K562 (cell line): ENCODE measurements at regions of chr18 and their contacts with region 1.

Region 1: DNA sequence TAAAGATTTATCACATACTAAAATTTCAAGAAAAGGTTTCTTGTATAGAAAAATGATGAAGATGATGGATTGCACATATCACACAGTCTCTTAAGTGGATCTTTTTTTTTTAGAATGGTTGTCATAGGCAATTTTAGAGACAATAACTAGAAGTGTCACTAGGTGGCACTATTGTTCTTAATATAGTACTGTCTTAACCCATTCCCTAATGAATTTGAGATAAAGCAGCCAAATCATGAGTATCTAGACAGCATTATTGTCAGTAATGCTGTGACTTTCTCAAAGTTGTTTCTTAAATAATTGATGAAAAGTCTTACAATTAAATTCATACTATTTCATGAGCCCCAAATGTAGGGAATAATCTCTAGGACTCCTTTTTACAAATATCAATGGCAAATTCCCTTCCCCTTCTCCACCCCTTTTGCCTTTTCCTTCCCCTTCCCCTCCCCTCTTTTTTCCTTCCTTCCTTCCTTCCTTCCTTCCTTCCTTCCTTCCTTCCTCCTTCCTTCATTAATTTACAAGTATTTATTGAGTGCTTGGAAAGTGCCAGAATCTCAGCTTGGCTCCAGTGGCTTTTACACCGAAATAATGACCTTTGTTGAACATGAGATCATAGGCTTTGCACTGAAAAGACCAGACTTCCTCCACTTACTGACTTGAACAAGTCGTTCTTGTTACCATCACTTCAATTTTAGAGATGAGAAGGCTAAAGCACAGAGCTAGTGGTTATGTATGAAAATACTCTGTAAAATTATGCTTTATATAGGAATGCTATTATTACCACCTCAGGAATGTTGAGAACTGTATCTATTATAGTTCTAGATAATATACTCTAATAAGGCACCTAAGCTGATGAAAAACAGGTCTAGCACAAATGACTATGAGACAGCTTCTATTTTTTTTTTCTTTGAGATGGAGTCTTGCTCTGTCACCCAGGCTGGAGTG is 19.8 kb downstream of the MYL12B start:
- DNase-seq: peak; percentile 64 to 85 (median 70)
- ATAC-seq: peak; percentile 81
- H3K4me3 ChIP-seq: no peak overlapping the region
- H3K27ac ChIP-seq: no peak overlapping the region
- H3K4me1 ChIP-seq: peaks cover 4 to 8% of the 10 kb centered on the region in 2 experiments; a peak in 4 of 5 replicates
- H3K27me3 ChIP-seq: no peaks in the 10 kb centered on the region
- CTCF ChIP-seq: peak; percentile 51 to 91 (median 60); a peak in 5 of 6 replicates
- EP300 ChIP-seq: no peak
- POLR2A ChIP-seq: no peak
- RAD21 ChIP-seq: peak; percentile 99

Region 2: GRCh38 chr18:1930291-1931270 is 1351.1 kb before region 1 on chr18:
- CTCF ChIA-PET with region 1: no interaction called
- POLR2A ChIA-PET with region 1: no interaction called
- in situ Hi-C with region 1: no loop called
- intact Hi-C with region 1: no loop called
- DNase-seq: no peak
- ATAC-seq: no peak
- H3K4me3 ChIP-seq: no peak overlapping the region
- H3K27ac ChIP-seq: no peak overlapping the region
- H3K4me1 ChIP-seq: no peaks in the 10 kb centered on the region
- H3K27me3 ChIP-seq: no peaks in the 10 kb centered on the region; a peak in 1 of 5 replicates
- CTCF ChIP-seq: no peak
- EP300 ChIP-seq: no peak
- POLR2A ChIP-seq: no peak
- RAD21 ChIP-seq: no peak

Region 3: DNA sequence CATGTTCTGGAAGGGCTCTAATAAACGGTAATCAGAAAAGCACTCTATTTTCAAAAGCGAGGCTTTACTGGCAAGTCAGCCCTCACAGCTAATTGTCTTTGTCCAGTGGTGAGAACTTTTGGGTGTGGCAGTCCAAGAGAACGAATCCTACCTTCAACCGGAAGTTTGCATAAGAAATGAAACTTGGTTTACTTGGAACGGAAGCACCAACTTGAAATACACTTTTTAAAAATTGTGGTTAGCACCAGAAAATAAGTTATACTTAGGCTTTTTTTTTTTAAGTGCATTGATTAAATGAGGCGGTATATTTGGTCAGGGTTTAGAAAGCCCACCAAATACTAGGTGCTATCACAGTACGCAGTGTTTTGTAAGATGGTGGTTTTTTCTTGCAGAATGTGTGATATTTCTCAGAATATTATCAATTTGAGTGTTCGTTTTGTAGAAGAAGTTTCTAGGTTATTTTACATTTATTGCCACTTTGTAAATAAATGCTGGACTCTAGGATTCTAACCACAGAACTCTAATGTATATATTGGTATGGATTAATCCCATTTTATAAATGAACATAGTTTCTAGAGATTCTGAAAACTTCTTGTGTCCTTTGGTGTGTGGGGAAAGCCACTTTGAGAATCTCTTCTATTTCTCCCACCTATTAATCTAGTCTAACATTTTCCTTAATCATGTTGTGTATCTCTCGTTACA is 32.9 kb before region 1 on chr18:
- CTCF ChIA-PET with region 1: no interaction called
- POLR2A ChIA-PET with region 1: no interaction called
- in situ Hi-C with region 1: no loop called
- intact Hi-C with region 1: no loop called
- DNase-seq: peak in 2 of 4 experiments; percentile 39 to 82
- ATAC-seq: peak; percentile 16; the same call in 2 of the 3 replicates
- H3K4me3 ChIP-seq: peak overlapping the region; percentile 92
- H3K27ac ChIP-seq: peak overlapping the region; percentile 100
- H3K4me1 ChIP-seq: peaks cover 3 to 13% of the 10 kb centered on the region in 2 experiments; a peak in 3 of 5 replicates
- H3K27me3 ChIP-seq: no peaks in the 10 kb centered on the region
- CTCF ChIP-seq: no peak
- EP300 ChIP-seq: 0 out of 2 replicates have a peak, but pooled peaks have one; percentile 13
- POLR2A ChIP-seq: no peak
- RAD21 ChIP-seq: no peak

Region 4: DNA sequence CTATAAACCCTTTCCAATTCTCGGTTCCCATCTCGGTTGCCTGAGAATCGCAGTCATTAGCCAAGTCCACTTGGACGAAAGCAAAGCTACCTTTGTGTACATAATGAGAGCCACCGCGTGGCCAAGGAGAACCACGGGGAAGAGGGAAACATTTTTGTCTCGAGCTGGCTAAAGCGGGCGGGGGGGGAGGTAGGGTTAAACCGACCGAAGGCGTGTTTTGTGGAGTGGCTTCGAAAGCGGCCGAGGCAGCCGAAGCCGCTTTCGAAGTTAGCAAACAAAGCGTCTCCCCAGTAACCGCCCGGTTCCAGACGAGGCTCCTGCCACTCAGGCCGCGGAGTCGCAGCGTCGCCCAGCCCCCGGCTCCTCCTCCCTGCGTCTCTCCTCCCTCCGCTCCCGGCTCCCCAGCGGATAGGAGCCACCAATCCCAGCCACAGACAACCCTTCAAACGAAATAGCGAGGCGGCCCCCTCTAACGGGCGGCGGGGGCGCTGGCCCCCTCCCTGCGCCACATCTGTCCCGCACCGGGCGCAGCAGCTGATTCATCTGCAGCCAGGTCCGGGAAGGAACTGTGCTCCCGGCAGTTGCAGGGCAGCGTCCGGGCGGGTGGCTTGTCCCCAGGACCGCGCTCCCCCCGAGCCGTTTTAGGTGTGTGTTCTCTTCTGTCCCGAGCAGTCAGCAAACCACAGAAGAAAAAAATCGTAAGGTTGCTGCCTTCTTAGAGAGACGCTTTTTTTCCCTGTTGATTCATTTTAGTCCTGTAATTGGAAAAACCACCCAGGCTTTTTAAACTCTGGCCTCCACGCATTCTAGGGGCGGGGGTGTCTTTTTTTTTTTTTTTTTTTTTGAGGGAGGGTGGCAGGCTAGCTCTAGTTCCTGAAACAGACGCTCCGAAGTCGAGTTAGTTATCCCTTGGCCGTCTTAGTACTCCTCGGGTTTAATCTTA is 166.4 kb after region 1 on chr18:
- CTCF ChIA-PET with region 1: interaction called, 7 read pairs
- POLR2A ChIA-PET with region 1: interaction called, 7 read pairs
- in situ Hi-C with region 1: loop called (anchors 5 kb)
- intact Hi-C with region 1: no loop called
- DNase-seq: peak; percentile 85 to 99 (median 89)
- ATAC-seq: peak; percentile 78
- H3K4me3 ChIP-seq: peak overlapping the region; percentile 87
- H3K27ac ChIP-seq: peak overlapping the region; percentile 98
- H3K4me1 ChIP-seq: peaks cover 31 to 51% of the 10 kb centered on the region in 2 experiments
- H3K27me3 ChIP-seq: no peaks in the 10 kb centered on the region
- CTCF ChIP-seq: peak in 2 of 3 experiments; percentile 31 to 49; a peak in 2 of 6 replicates
- EP300 ChIP-seq: peak; percentile 81
- POLR2A ChIP-seq: no peak
- RAD21 ChIP-seq: peak in 1 of 2 experiments; percentile 33; a peak in 3 of 4 replicates

Region 5: GRCh38 chr18:3585656-3586509 is 304.2 kb after region 1 on chr18:
- CTCF ChIA-PET with region 1: no interaction called
- POLR2A ChIA-PET with region 1: no interaction called
- in situ Hi-C with region 1: loop called (anchors 5 kb)
- intact Hi-C with region 1: loop called (anchors 1 kb)
- DNase-seq: peak; percentile 90 to 98 (median 93)
- ATAC-seq: peak; percentile 96
- H3K4me3 ChIP-seq: no peak overlapping the region
- H3K27ac ChIP-seq: peak overlapping the region; percentile 64
- H3K4me1 ChIP-seq: peaks cover 25 to 32% of the 10 kb centered on the region in 2 experiments
- H3K27me3 ChIP-seq: no peaks in the 10 kb centered on the region
- CTCF ChIP-seq: peak; percentile 94 to 98 (median 98)
- EP300 ChIP-seq: peak; percentile 77
- POLR2A ChIP-seq: no peak
- RAD21 ChIP-seq: peak; percentile 96 to 97

Region 6: GRCh38 chr18:3623769-3624545 is 342.2 kb after region 1 on chr18:
- CTCF ChIA-PET with region 1: no interaction called
- POLR2A ChIA-PET with region 1: no interaction called
- in situ Hi-C with region 1: no loop called
- intact Hi-C with region 1: no loop called
- DNase-seq: peak; percentile 83 to 97 (median 85)
- ATAC-seq: peak; percentile 86
- H3K4me3 ChIP-seq: peak overlapping the region; percentile 26
- H3K27ac ChIP-seq: peak overlapping the region; percentile 98
- H3K4me1 ChIP-seq: peaks cover 59 to 66% of the 10 kb centered on the region in 2 experiments
- H3K27me3 ChIP-seq: no peaks in the 10 kb centered on the region
- CTCF ChIP-seq: no peak; a peak in 1 of 6 replicates
- EP300 ChIP-seq: peak; percentile 81
- POLR2A ChIP-seq: peak; percentile 92
- RAD21 ChIP-seq: no peak; a peak in 2 of 4 replicates

Region 7: DNA sequence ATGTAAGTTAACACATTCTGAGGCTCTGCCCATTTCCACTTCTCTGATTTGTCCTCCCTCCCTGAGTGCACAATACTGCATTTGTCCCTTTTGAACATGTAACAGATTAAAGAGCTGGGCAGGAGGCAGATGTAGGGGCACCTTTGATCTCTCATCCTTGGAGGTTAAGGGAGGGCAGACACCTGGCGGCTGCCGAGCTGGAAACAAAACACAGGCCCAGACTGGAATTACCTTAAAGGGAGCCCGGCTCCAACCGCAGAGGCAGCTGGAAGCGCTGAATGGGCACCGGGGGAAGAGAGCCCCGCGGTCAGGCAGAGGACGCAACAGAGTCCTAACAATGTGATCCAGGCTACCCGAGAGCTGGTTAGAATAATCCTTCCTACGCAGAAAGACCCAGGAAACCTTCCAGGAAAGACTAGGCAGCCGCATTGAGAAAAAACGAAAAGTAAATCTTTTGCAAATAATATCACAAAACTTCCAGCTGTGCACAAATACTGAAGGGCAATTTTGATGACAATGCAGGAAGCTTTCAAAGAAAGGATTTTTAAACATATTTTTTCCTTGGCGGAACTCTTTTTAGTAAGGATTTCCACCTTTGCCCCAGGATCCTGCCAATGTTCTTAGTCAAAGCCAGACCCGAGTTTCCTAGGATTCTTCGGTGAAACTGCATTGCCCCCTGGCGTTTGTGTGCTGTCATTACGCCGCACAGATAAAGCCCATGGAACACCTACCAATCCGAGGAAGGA is 384.2 kb after region 1 on chr18:
- CTCF ChIA-PET with region 1: interaction called, 83 read pairs
- POLR2A ChIA-PET with region 1: interaction called, 3 read pairs
- in situ Hi-C with region 1: loop called (anchors 5 kb)
- intact Hi-C with region 1: loop called (anchors 1 kb)
- DNase-seq: peak; percentile 86 to 94 (median 88)
- ATAC-seq: peak; percentile 82
- H3K4me3 ChIP-seq: no peak overlapping the region
- H3K27ac ChIP-seq: peak overlapping the region; percentile 73
- H3K4me1 ChIP-seq: peaks cover 20 to 39% of the 10 kb centered on the region in 2 experiments
- H3K27me3 ChIP-seq: no peaks in the 10 kb centered on the region
- CTCF ChIP-seq: peak; percentile 91 to 98 (median 98)
- EP300 ChIP-seq: peak; percentile 52; the same call in 1 of the 2 replicates
- POLR2A ChIP-seq: no peak
- RAD21 ChIP-seq: peak; percentile 100

Region 8: DNA sequence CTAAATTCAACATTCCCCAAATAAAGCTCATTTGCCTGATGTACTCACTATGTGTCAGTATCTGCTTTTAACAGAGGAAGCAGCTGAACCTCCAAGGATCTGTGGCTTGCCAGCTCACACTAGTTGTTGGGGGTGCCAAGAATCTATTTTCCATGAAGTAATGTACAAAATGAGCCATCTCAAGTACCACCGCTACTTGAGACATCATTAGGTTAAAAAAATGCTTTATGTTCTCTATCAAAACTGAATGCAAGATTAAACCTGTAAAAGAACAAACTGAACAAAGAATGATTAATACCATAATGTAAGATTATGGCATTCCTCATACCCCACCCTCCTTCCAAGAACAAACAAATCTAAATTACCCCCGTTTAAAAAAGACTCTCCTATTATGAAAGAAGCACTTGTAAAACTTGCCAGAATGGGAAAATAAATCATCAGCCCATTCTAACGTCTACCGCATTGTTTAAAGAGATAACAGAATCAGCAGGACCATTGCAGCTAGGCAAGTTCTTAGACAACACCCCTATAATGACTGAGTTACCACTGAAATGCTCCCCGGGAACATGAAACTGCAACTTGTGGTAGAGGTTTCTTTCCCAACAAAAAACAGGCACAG is 701.7 kb after region 1 on chr18:
- CTCF ChIA-PET with region 1: no interaction called
- POLR2A ChIA-PET with region 1: no interaction called
- in situ Hi-C with region 1: loop called (anchors 10 kb)
- intact Hi-C with region 1: no loop called
- DNase-seq: peak in 2 of 4 experiments; percentile 13 to 21
- ATAC-seq: no peak
- H3K4me3 ChIP-seq: no peak overlapping the region
- H3K27ac ChIP-seq: no peak overlapping the region
- H3K4me1 ChIP-seq: peaks cover 0 to 4% of the 10 kb centered on the region in 2 experiments; a peak in 2 of 5 replicates
- H3K27me3 ChIP-seq: peaks cover 0 to 4% of the 10 kb centered on the region in 2 experiments; a peak in 1 of 5 replicates
- CTCF ChIP-seq: no peak
- EP300 ChIP-seq: no peak
- POLR2A ChIP-seq: no peak
- RAD21 ChIP-seq: no peak

Region 9: GRCh38 chr18:5057386-5058348 is 1775.9 kb after region 1 on chr18:
- CTCF ChIA-PET with region 1: no interaction called
- POLR2A ChIA-PET with region 1: no interaction called
- in situ Hi-C with region 1: loop called (anchors 10 kb)
- intact Hi-C with region 1: no loop called
- DNase-seq: peak; percentile 68 to 77 (median 72)
- ATAC-seq: peak; percentile 87
- H3K4me3 ChIP-seq: no peak overlapping the region
- H3K27ac ChIP-seq: no peak overlapping the region
- H3K4me1 ChIP-seq: no peaks in the 10 kb centered on the region
- H3K27me3 ChIP-seq: no peaks in the 10 kb centered on the region
- CTCF ChIP-seq: peak; percentile 74 to 79 (median 74)
- EP300 ChIP-seq: no peak
- POLR2A ChIP-seq: no peak
- RAD21 ChIP-seq: peak; percentile 73 to 85